ENCODE measurements at regions of chr12 and their contacts with region 1.

Region 1: DNA sequence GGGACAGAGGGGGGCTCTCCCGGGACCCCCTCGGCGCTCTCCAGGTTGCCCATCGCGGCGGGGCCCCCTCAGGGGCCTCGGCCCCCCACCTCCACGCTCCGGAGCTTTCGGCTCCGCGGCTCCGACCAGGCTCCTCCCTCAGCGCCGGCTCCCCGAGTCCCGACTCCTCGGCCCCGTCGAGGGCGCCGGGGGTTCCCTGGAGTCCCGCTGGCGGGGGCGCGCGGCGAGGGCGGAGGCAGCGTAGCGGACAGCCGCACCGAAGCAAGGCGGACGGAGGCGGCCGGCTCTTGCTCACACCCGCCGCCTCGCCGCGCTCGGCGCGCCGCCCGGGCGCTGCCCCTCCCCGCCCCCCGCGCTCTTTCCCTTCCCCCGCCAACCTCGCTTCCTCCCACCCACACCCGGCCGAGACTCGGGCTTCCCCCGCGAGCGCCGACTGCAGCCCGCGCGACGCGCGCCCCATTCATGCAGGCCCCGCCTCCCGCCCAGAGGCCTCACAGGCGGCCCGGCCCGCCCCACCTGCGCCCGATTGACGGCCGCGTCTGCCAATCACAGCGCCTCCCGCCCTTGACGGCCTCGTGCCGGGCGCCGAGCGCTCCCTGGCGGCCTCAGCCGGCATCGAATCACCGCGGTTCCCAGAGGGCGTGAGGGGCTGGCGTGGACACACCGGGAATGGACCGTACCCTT is at the start of gene FMNL3:
- DNase-seq: peak; percentile 100
- H3K4me3 Mint-ChIP-seq: peak within 1 kb of the TSS; percentile 97
- H3K27ac Mint-ChIP-seq: peak within 1 kb of the TSS; percentile 89
- H3K4me1 Mint-ChIP-seq: peaks cover 43% of the 10 kb centered on the region
- H3K27me3 Mint-ChIP-seq: peaks cover 23% of the 10 kb centered on the region
- total RNA-seq, gene FMNL3: 39.1 and 39.8 TPM in 2 replicates

Region 2: DNA sequence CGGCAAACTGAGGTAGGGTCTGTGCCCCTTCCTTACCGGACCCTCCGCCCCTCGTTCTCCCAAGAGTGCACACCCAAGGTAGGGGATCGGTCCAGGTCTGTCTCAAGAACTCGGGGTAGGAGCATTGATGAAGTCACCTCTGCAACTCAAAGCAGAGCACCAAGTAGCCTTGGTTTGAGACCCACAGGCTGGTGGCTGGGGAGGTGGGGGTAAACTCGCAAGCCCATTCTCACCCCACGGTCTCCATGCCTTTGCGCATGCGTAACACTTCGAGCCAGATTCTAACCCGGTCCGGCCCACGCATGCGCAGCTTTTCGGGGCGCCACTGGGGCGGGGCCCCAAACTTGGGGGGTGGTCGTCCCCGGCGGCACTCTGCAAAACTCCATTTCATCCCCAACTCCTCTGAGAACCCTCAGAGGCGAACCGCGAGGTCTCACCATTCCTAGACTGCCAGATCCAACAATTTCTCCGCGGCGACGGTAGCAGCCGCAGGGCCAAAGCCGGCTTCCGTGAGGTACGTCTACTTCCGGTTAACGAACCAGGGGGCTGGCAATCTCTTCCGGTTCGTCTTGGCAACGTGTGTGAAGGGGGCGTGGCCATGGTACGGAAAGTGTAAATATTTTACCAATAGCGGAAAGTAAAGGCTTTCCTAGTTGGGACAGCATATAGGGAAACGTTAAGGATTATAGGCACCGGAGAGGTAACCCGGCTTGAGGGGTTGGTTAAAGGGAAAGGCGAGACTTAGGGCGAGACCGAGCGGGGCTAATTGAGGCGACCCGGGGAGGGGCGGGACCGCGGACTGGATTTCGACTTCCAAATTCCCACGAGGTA is 139.4 kb before region 1 on chr12 and contains the start of gene MCRS1:
- intact Hi-C with region 1: loop called (anchors 5 kb)
- DNase-seq: peak; percentile 97
- H3K4me3 Mint-ChIP-seq: peak within 1 kb of the TSS; percentile 93
- H3K27ac Mint-ChIP-seq: peak within 1 kb of the TSS; percentile 99
- H3K4me1 Mint-ChIP-seq: peaks cover 39% of the 10 kb centered on the region
- H3K27me3 Mint-ChIP-seq: no peaks in the 10 kb centered on the region
- total RNA-seq, gene MCRS1: 71.4 and 79.6 TPM in 2 replicates

Region 3: GRCh38 chr12:49644620-49644994 is 62.7 kb before region 1 on chr12:
- intact Hi-C with region 1: loop called (anchors 1 kb)
- DNase-seq: peak; percentile 94
- H3K4me3 Mint-ChIP-seq: no peak overlapping the region
- H3K27ac Mint-ChIP-seq: peak overlapping the region; percentile 70
- H3K4me1 Mint-ChIP-seq: peaks cover 29% of the 10 kb centered on the region
- H3K27me3 Mint-ChIP-seq: no peaks in the 10 kb centered on the region

Region 4: DNA sequence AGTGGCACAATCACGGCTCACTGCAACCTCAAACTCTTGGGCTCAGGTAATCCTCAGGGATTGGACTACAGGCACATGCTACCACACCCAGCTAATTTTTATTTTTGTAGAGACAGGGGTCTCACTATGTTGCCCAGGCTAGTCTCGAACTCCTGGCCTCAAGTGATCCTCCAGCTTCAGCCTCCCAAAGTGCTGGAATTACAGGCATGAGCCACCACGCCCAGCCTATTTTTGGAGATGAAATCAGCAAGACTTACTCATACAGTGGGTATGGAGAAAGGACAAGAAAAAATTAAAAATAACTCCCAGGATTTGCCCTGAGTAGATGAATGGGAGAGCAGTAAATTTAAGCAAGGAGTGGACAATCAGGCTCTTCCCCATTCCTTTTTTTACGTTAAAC is 13.3 kb before region 1 on chr12:
- intact Hi-C with region 1: no loop called
- DNase-seq: no peak
- H3K4me3 Mint-ChIP-seq: no peak overlapping the region
- H3K27ac Mint-ChIP-seq: no peak overlapping the region
- H3K4me1 Mint-ChIP-seq: peaks cover 32% of the 10 kb centered on the region
- H3K27me3 Mint-ChIP-seq: no peaks in the 10 kb centered on the region

Region 5: DNA sequence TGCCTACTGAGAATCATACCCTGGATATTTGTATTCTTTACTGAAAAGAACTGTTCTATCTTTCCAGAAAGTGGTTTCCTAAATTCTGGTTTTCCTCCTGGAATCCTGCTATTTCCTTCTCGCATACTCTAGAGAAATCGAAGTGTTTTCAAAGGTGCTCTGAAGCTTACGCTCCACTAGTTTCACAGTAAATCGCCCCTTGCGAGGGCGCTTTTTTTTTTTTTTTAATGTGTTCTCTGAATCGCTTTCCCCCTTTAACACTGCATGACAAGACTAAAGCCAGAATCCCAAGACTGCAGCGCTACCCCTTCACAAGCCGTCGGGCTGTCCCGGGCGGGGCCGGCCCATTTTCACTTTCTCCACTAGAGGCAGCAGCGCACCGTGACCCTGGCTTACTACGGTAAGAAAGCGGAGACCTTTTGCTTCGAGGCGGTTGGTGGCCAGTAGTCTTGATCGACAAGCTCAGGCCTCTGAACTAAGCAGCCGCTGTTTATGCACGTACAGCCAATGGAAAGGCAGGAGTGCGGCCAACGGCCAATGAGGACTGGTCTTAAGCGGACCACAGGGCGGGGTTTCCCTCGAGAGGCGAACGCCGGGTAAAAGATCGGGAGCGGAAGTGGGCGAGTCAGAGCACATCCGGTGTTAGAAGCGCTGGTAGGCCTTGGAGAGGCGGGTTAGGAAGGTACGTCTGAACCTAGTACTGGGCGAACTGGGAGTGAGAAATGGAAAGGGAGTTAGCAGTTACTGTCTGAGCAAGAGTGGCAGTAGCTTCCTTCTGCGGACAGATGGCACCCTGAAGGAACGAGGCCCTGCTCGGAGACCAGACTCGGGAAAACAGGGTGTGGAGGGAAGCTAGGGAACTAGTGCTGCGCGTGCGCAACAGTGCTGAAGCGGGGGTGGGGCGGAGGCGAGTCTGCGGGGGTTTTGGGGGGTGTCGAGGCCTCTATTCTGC is 33.9 kb after region 1 on chr12 and contains the start of gene TMBIM6:
- intact Hi-C with region 1: loop called (anchors 1 kb)
- DNase-seq: peak; percentile 100
- H3K4me3 Mint-ChIP-seq: peak within 1 kb of the TSS; percentile 90
- H3K27ac Mint-ChIP-seq: peak within 1 kb of the TSS; percentile 95
- H3K4me1 Mint-ChIP-seq: peaks cover 31% of the 10 kb centered on the region
- H3K27me3 Mint-ChIP-seq: peaks cover 5% of the 10 kb centered on the region
- total RNA-seq, gene TMBIM6: 370 and 372 TPM in 2 replicates

Region 6: DNA sequence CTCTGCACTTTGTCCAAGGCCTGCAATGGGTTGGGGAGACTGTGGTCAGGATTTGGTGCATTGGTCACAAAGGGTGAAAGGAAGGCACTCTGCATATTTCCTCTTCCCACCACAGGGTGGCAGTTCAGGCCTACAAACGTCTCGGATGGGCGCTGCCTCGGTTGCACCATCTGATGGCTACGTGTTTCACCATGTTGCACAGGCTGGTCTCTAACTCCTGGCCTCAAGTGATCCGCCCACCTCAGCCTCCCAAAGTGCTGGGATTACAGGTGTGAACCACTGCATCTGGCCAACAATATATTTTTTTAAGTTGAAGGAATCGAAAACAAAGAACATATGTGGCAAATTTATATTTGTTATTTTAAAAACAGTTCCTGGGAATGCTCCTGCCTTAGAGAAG is 69.1 kb after region 1 on chr12:
- intact Hi-C with region 1: loop called (anchors 2 kb)
- DNase-seq: peak; percentile 87
- H3K4me3 Mint-ChIP-seq: no peak overlapping the region
- H3K27ac Mint-ChIP-seq: no peak overlapping the region
- H3K4me1 Mint-ChIP-seq: peaks cover 11% of the 10 kb centered on the region
- H3K27me3 Mint-ChIP-seq: peaks cover 20% of the 10 kb centered on the region

Measured in activated CD4-positive, alpha-beta T cell treated with anti-CD3 and anti-CD28 coated beads, Interleukin-2, amount 10 ng/mL, durations not matched to agents 24 days and 14 days (primary cell).